ENCODE measurements at regions of chr6 and their contacts with region 1.

Region 1: DNA sequence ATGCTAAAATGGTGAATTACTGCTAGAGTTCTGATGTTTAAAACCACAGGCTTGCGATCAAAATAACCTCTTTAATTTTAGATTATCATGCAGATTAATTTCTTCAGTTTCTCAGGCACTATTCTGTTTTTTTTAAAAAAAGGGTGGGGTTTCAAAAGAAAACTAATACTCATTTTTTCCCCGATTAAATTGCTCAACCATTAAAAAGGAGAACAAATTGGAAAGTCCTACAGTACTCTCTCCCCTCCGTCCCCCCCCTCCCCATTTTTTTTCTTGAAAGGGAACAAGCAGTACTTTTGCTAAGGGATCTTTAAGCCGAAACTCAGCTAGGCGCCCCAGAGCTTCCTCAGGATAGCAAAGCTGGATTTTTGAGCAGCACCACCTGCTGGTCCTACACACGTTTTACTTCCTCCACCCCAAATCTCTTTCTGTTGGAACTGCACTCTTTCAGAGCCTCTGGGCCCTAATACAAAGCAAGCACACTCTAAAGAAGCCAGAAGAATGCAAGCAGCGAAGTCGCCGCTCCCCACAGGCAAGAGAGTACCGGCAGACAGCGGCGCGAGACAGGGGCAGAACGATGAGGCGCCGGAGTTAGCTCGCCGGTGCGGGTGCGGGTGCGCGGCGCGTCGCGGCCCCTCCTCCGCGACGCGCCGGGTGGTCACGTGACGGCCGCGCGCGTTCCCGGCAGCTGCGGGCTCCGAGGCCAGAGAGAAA is at the start of gene RNF146:
- DNase-seq: peak; percentile 42 to 86 (median 70)
- ATAC-seq: peak; percentile 78
- H3K4me3 ChIP-seq: peak within 1 kb of the TSS; percentile 87 to 95
- H3K4me3 Mint-ChIP-seq: peak within 1 kb of the TSS; percentile 99
- H3K27ac ChIP-seq: peak within 1 kb of the TSS; percentile 89 to 94
- H3K27ac Mint-ChIP-seq: peak within 1 kb of the TSS; percentile 99
- H3K4me1 ChIP-seq: peaks cover 20% of the 10 kb centered on the region
- H3K4me1 Mint-ChIP-seq: peaks cover 37% of the 10 kb centered on the region
- H3K27me3 ChIP-seq: no peaks in the 10 kb centered on the region
- H3K27me3 Mint-ChIP-seq: peaks cover 1% of the 10 kb centered on the region
- CTCF ChIP-seq: peak; percentile 68
- total RNA-seq, gene RNF146: 7.2 to 8.9 TPM

Region 2: GRCh38 chr6:125749173-125749864 is 1517.0 kb before region 1 on chr6 and contains the start of gene HEY2:
- CTCF ChIA-PET with region 1: no interaction called
- POLR2A ChIA-PET with region 1: no interaction called
- intact Hi-C with region 1: loop called in 1 of 2 experiments (anchors 10 kb)
- DNase-seq: peak; percentile 54 to 93 (median 77)
- ATAC-seq: peak; percentile 70
- H3K4me3 ChIP-seq: peak within 1 kb of the TSS; percentile 63 to 80
- H3K4me3 Mint-ChIP-seq: peak within 1 kb of the TSS; percentile 88
- H3K27ac ChIP-seq: peak within 1 kb of the TSS in 1 of 2 experiments; percentile 1
- H3K27ac Mint-ChIP-seq: peak within 1 kb of the TSS; percentile 72
- H3K4me1 ChIP-seq: peaks cover 30% of the 10 kb centered on the region
- H3K4me1 Mint-ChIP-seq: peaks cover 38% of the 10 kb centered on the region
- H3K27me3 ChIP-seq: peaks cover 12 to 14% of the 10 kb centered on the region in 2 experiments
- H3K27me3 Mint-ChIP-seq: peaks cover 57% of the 10 kb centered on the region
- CTCF ChIP-seq: no peak
- total RNA-seq, gene HEY2: 0.11 to 0.33 TPM

Region 3: GRCh38 chr6:125986300-125987025 is 1279.9 kb before region 1 on chr6 and contains the start of gene TRMT11:
- CTCF ChIA-PET with region 1: no interaction called
- POLR2A ChIA-PET with region 1: no interaction called
- intact Hi-C with region 1: loop called in 1 of 2 experiments (anchors 5 kb)
- DNase-seq: peak; percentile 63 to 92 (median 79)
- ATAC-seq: peak; percentile 95
- H3K4me3 ChIP-seq: peak within 1 kb of the TSS; percentile 75 to 95
- H3K4me3 Mint-ChIP-seq: peak within 1 kb of the TSS; percentile 35
- H3K27ac ChIP-seq: peak within 1 kb of the TSS; percentile 77 to 84
- H3K27ac Mint-ChIP-seq: no peak within 1 kb of the TSS
- H3K4me1 ChIP-seq: peaks cover 31% of the 10 kb centered on the region
- H3K4me1 Mint-ChIP-seq: peaks cover 15% of the 10 kb centered on the region
- H3K27me3 ChIP-seq: no peaks in the 10 kb centered on the region
- H3K27me3 Mint-ChIP-seq: no peaks in the 10 kb centered on the region
- CTCF ChIP-seq: no peak
- total RNA-seq, gene TRMT11: 19.0 to 19.4 TPM

Region 4: DNA sequence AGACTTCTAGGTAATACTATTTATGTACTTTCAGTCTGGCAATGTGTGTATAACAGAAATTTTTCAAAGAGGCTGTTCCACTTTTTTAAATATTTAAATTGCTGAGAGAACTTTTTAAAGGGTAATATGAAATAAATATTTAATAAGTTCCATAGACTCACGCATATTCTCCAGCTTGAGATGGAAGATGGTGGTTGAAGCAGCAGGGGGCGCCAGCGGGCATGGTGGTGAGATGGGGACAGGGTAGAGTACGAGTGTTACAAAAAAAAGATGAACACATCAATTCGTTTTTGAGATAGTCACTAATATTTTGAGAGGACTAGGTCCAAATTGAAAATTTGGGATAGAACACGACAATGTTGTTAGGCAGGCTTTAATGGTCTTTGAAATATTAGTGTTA is 79.4 kb before region 1 on chr6:
- CTCF ChIA-PET with region 1: interaction called, 10 read pairs
- POLR2A ChIA-PET with region 1: no interaction called
- intact Hi-C with region 1: no loop called
- DNase-seq: peak; percentile 16 to 53 (median 35)
- ATAC-seq: no peak
- H3K4me3 ChIP-seq: no peak overlapping the region
- H3K4me3 Mint-ChIP-seq: no peak overlapping the region
- H3K27ac ChIP-seq: no peak overlapping the region
- H3K27ac Mint-ChIP-seq: no peak overlapping the region
- H3K4me1 ChIP-seq: no peaks in the 10 kb centered on the region
- H3K4me1 Mint-ChIP-seq: no peaks in the 10 kb centered on the region
- H3K27me3 ChIP-seq: no peaks in the 10 kb centered on the region
- H3K27me3 Mint-ChIP-seq: peaks cover 7% of the 10 kb centered on the region
- CTCF ChIP-seq: no peak

Region 5: GRCh38 chr6:127201321-127201720 is 65.0 kb before region 1 on chr6:
- CTCF ChIA-PET with region 1: no interaction called
- POLR2A ChIA-PET with region 1: no interaction called
- intact Hi-C with region 1: no loop called
- DNase-seq: no peak
- ATAC-seq: no peak
- H3K4me3 ChIP-seq: no peak overlapping the region
- H3K4me3 Mint-ChIP-seq: no peak overlapping the region
- H3K27ac ChIP-seq: no peak overlapping the region
- H3K27ac Mint-ChIP-seq: no peak overlapping the region
- H3K4me1 ChIP-seq: no peaks in the 10 kb centered on the region
- H3K4me1 Mint-ChIP-seq: no peaks in the 10 kb centered on the region
- H3K27me3 ChIP-seq: no peaks in the 10 kb centered on the region
- H3K27me3 Mint-ChIP-seq: peaks cover 18% of the 10 kb centered on the region
- CTCF ChIP-seq: no peak

Region 6: GRCh38 chr6:127219869-127220268 is 46.5 kb before region 1 on chr6:
- CTCF ChIA-PET with region 1: no interaction called
- POLR2A ChIA-PET with region 1: no interaction called
- intact Hi-C with region 1: no loop called
- DNase-seq: no peak
- ATAC-seq: no peak
- H3K4me3 ChIP-seq: no peak overlapping the region
- H3K4me3 Mint-ChIP-seq: no peak overlapping the region
- H3K27ac ChIP-seq: no peak overlapping the region
- H3K27ac Mint-ChIP-seq: no peak overlapping the region
- H3K4me1 ChIP-seq: no peaks in the 10 kb centered on the region
- H3K4me1 Mint-ChIP-seq: no peaks in the 10 kb centered on the region
- H3K27me3 ChIP-seq: no peaks in the 10 kb centered on the region
- H3K27me3 Mint-ChIP-seq: peaks cover 25% of the 10 kb centered on the region
- CTCF ChIP-seq: no peak

Region 7: DNA sequence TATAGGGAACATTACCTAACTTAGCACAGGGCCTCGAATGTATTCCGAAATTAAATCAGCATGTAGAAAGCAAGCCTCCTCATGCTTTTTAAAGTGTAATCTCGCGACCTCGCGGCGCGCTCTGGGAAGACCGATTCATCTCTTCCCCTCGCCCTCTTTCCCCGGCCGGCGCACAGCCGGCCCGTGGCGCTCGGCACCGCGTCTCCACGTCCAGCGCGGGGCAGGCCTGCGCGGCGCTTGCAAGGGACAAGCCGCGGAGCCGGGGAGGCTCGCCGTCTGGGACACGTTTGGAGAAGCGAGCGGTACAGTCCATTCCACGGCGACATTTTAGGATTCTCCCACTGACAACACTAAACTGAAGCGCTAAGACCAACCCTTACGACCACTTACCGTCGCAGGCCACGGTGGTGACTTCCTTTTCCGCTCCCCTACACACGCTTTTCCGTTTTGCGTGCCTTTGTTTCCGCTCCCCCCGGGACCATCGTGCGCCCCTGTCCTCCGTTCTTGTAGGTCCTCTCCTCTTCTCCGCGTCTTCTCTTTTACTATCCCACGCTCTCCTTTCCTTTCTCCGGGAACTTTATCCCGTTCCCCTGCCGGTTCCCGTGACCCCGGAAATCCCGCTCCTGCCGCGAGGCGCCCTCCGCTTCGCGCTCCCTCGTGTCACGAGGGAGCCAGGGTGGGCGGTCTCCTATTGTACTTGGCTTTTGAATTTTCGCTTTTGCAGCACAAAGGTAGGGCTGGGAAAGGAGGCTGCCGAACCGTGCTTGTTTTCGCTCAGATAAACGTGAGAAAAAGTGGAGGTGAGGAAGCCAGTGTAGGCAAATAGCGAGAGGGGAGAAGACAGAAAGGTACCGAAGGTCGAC is 76.8 kb after region 1 on chr6 and contains the start of gene ECHDC1:
- CTCF ChIA-PET with region 1: interaction called, 5 read pairs
- POLR2A ChIA-PET with region 1: no interaction called
- intact Hi-C with region 1: loop called (anchors 1 to 2 kb)
- DNase-seq: peak; percentile 50 to 85 (median 74)
- ATAC-seq: peak; percentile 85
- H3K4me3 ChIP-seq: peak within 1 kb of the TSS; percentile 65 to 96
- H3K4me3 Mint-ChIP-seq: no peak within 1 kb of the TSS
- H3K27ac ChIP-seq: peak within 1 kb of the TSS; percentile 88 to 93
- H3K27ac Mint-ChIP-seq: no peak within 1 kb of the TSS
- H3K4me1 ChIP-seq: peaks cover 41% of the 10 kb centered on the region
- H3K4me1 Mint-ChIP-seq: peaks cover 14% of the 10 kb centered on the region
- H3K27me3 ChIP-seq: no peaks in the 10 kb centered on the region
- H3K27me3 Mint-ChIP-seq: no peaks in the 10 kb centered on the region
- CTCF ChIP-seq: no peak
- total RNA-seq, gene ECHDC1: 9.3 to 10.0 TPM

Region 8: DNA sequence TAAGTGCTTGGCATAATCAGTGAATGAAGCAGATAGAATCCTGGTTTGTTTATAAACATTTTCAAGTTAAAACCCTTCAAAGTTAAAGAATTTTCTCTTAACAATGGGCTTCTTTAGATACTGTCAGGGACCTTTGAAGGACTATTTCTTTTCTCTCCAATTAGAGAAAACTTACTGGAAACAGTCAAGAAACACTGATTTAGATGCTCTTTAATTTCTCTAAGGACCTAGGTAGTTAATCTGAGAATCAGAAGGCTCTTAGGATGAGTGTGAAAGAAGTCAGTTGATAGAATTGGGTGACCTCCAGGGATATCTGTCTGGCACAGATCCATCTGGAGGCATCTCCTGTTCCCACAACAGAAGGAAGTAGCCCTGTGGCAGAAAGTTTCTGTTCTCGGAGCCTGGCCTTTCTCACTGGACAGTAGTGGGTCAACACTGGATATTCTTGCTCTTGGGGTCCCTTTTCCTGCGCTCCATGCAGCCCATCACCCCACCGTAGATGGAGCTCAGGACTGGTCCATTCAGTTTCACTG is 170.3 kb after region 1 on chr6:
- CTCF ChIA-PET with region 1: no interaction called
- POLR2A ChIA-PET with region 1: no interaction called
- intact Hi-C with region 1: no loop called
- DNase-seq: no peak
- ATAC-seq: no peak
- H3K4me3 ChIP-seq: no peak overlapping the region
- H3K4me3 Mint-ChIP-seq: no peak overlapping the region
- H3K27ac ChIP-seq: no peak overlapping the region
- H3K27ac Mint-ChIP-seq: no peak overlapping the region
- H3K4me1 ChIP-seq: no peaks in the 10 kb centered on the region
- H3K4me1 Mint-ChIP-seq: no peaks in the 10 kb centered on the region
- H3K27me3 ChIP-seq: no peaks in the 10 kb centered on the region
- H3K27me3 Mint-ChIP-seq: peaks cover 5% of the 10 kb centered on the region
- CTCF ChIP-seq: no peak